CD4-positive, alpha-beta T cell (primary cell): ENCODE measurements at regions of chr19 and their contacts with region 1.

Region 1: DNA sequence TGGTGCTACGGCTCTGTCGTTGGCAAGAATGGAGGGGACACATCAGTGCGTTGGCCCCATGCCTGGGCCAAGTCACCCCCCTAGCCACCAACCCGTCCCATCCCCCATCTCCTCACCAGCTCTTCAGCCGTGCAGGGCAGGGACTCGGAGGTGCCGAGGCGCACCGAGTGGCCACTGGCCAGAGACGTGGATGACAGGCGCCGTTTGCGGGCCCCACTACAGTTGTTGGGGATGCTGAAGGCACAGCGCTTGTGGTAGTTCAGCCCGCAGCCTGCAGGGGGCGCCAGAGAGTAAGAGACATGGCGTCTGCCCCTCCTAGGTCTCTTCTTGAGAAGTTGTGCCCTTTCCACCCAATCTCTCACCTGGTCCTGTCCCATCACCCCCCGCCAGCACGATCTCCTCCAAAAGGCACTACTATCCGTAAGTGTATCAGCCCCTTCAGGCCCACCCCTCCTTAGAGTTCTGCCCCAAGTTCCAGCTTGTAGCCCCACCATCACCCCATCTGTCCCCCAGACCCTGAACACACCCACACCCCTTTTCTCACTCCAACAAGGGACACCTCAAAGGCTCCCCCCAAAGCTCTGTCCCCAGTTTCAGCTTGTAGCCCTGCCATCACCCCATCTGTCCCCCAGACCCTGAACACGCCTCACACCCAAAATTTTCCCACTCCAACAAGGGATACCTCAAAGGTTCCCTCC is 12.4 kb downstream of the PRKD2 start:
- DNase-seq: peak; percentile 72 to 95 (median 88)
- ATAC-seq: peak; percentile 99
- H3K4me3 ChIP-seq: no peak overlapping the region
- H3K4me3 Mint-ChIP-seq: no peak overlapping the region
- H3K27ac ChIP-seq: no peak overlapping the region
- H3K27ac Mint-ChIP-seq: peak overlapping the region; percentile 61
- H3K4me1 ChIP-seq: peaks cover 13% of the 10 kb centered on the region
- H3K4me1 Mint-ChIP-seq: peaks cover 15% of the 10 kb centered on the region
- H3K27me3 ChIP-seq: no peaks in the 10 kb centered on the region
- H3K27me3 Mint-ChIP-seq: no peaks in the 10 kb centered on the region
- CTCF ChIP-seq: peak; percentile 97

Region 2: DNA sequence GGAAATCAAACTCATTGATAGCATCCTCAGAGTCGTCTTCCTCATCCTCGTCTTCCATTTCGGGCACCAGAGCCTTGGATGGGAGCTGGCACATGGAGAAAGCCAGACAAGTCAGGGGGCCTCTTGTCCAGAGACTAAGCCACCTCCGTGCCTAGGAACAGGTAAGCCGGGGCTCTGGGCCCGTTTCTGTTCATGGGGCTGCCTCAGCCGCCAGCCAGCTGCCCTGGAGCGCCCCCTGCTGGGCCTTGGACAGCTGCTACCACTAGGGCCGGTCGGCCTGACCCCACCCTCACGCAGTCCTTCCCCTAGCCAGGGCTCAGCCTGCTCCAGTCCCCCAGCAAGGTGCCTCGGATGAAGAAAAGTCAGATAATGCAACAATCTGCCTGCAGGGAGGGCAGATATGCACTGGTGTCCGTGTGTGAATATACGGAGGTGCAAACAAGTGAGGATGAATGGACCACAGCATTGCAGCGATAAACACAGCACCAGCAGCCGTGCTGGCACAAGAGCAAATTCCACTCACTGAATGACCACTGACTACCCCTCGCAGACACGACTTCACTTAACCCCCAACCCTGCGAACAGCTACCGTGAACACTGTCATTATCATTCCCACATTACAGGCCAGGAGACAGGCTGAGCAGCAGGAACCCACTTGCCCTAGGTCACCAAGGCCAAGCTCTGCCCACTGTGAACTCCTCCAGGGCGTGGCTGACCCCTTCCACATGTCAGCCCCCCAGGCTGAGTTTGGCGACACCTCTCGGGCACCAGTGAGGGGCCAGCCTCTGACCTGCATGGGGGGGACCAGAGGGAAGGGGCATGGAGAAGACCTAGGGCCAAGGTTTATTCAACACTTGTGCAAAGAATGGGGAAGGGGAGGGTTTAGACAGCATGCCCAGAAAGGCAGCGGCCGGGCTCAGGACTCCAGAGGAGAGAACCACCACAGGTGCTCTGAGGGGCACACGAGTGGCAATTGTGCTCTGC is 24.5 kb after region 1 on chr19:
- CTCF ChIA-PET with region 1: interaction called, 45 read pairs
- POLR2A ChIA-PET with region 1: interaction called, 7 read pairs
- intact Hi-C with region 1: loop called (anchors 1 kb)
- DNase-seq: peak; percentile 69 to 90 (median 82)
- ATAC-seq: peak; percentile 89
- H3K4me3 ChIP-seq: no peak overlapping the region
- H3K4me3 Mint-ChIP-seq: no peak overlapping the region
- H3K27ac ChIP-seq: no peak overlapping the region
- H3K27ac Mint-ChIP-seq: no peak overlapping the region
- H3K4me1 ChIP-seq: peaks cover 11% of the 10 kb centered on the region
- H3K4me1 Mint-ChIP-seq: peaks cover 8% of the 10 kb centered on the region
- H3K27me3 ChIP-seq: no peaks in the 10 kb centered on the region
- H3K27me3 Mint-ChIP-seq: no peaks in the 10 kb centered on the region
- CTCF ChIP-seq: peak; percentile 89

Region 3: GRCh38 chr19:46746281-46747013 is 41.9 kb after region 1 on chr19 and contains the start of gene STRN4:
- CTCF ChIA-PET with region 1: interaction called, 3 read pairs
- POLR2A ChIA-PET with region 1: no interaction called
- intact Hi-C with region 1: loop called in 1 of 2 experiments (anchors 5 kb)
- DNase-seq: peak; percentile 30 to 87 (median 54)
- ATAC-seq: peak; percentile 69
- H3K4me3 ChIP-seq: peak within 1 kb of the TSS; percentile 78
- H3K4me3 Mint-ChIP-seq: peak within 1 kb of the TSS; percentile 94
- H3K27ac ChIP-seq: peak within 1 kb of the TSS; percentile 9 to 29
- H3K27ac Mint-ChIP-seq: peak within 1 kb of the TSS; percentile 87
- H3K4me1 ChIP-seq: peaks cover 42% of the 10 kb centered on the region
- H3K4me1 Mint-ChIP-seq: peaks cover 55% of the 10 kb centered on the region
- H3K27me3 ChIP-seq: no peaks in the 10 kb centered on the region
- H3K27me3 Mint-ChIP-seq: no peaks in the 10 kb centered on the region
- CTCF ChIP-seq: no peak
- total RNA-seq, gene STRN4: 90.0 to 94.0 TPM